Naive thymus-derived CD4-positive, alpha-beta T cell (primary cell): ENCODE measurements at regions of chr4 and their contacts with region 1.

Region 1: GRCh38 chr4:155371432-155372043 is 5.2 kb downstream of the MAP9 start:
- DNase-seq: peak in 5 of 9 donors; percentile 19 to 37 (median 33)
- ATAC-seq: peak; percentile 33
- H3K4me3 ChIP-seq: no peak overlapping the region
- H3K4me3 Mint-ChIP-seq: no peak overlapping the region
- H3K27ac ChIP-seq: no peak overlapping the region
- H3K27ac Mint-ChIP-seq: no peak overlapping the region
- H3K4me1 ChIP-seq: peaks cover 7 to 8% of the 10 kb centered on the region in 2 donors
- H3K4me1 Mint-ChIP-seq: peaks cover 4 to 18% (median 13%) of the 10 kb centered on the region in 7 donors
- H3K27me3 ChIP-seq: no peaks in the 10 kb centered on the region
- H3K27me3 Mint-ChIP-seq: no peaks in the 10 kb centered on the region

Region 2: GRCh38 chr4:154642373-154643009 is 729.0 kb before region 1 on chr4:
- CTCF ChIA-PET with region 1: no interaction called
- POLR2A ChIA-PET with region 1: no interaction called
- intact Hi-C with region 1: loop called in 1 of 2 experiments (anchors 5 kb)
- DNase-seq: no peak
- ATAC-seq: no peak
- H3K4me3 ChIP-seq: no peak overlapping the region
- H3K4me3 Mint-ChIP-seq: no peak overlapping the region
- H3K27ac ChIP-seq: no peak overlapping the region
- H3K27ac Mint-ChIP-seq: no peak overlapping the region
- H3K4me1 ChIP-seq: no peaks in the 10 kb centered on the region
- H3K4me1 Mint-ChIP-seq: no peaks in the 10 kb centered on the region
- H3K27me3 ChIP-seq: no peaks in the 10 kb centered on the region
- H3K27me3 Mint-ChIP-seq: peaks cover 7 to 31% (median 24%) of the 10 kb centered on the region in 5 donors

Region 3: GRCh38 chr4:154807042-154807630 is 564.4 kb before region 1 on chr4:
- CTCF ChIA-PET with region 1: no interaction called
- POLR2A ChIA-PET with region 1: no interaction called
- intact Hi-C with region 1: loop called (anchors 1 to 2 kb)
- DNase-seq: peak in 1 of 9 donors; percentile 15
- ATAC-seq: peak; percentile 41
- H3K4me3 ChIP-seq: no peak overlapping the region
- H3K4me3 Mint-ChIP-seq: peak overlapping the region in 1 of 10 donors; percentile 6
- H3K27ac ChIP-seq: no peak overlapping the region
- H3K27ac Mint-ChIP-seq: no peak overlapping the region
- H3K4me1 ChIP-seq: no peaks in the 10 kb centered on the region
- H3K4me1 Mint-ChIP-seq: peaks cover 0 to 4% (median 0%) of the 10 kb centered on the region in 7 donors
- H3K27me3 ChIP-seq: no peaks in the 10 kb centered on the region
- H3K27me3 Mint-ChIP-seq: peaks cover 0 to 16% (median 7%) of the 10 kb centered on the region in 5 donors

Region 4: DNA sequence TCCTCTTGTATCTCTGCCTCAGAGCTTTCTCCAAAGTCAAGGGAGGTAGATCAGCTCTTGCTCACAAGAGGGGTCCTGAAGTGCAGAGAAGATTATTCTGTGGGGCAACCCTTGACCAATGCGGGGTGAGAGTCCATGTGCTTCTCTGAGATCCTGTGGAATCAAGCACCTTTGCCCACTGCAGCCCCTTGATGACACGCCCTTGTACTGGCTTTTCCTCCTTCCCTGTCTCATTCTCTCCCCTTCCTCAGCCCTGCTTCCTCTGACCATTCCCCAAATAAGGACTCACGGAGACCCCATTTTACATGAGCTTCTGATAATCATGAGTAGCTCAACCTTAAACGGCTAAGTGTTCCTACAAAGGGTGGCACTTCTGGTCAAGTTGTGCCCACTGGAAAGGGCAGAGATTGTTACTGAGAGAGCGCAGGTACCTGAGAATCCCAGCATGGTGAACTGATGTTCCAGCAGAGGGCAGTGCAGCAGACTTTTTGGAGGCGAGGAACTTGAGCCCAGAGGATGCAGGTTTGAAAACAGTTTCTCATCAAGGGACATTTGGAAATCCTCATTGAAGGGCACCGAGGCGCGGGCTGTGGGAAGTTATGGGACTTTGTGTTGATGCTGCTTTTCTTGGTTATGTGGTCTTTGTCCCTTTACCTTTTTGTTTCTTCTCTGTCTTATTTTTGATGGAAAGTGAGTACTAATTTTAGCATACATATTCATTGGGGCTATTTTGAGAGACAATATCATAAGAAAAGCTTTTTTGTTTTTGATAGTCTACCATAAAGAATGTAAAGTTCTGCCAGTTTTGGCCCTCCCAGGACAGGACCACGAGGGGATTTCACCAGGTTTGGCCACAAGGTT is 389.1 kb before region 1 on chr4:
- CTCF ChIA-PET with region 1: no interaction called
- POLR2A ChIA-PET with region 1: no interaction called
- intact Hi-C with region 1: loop called in 1 of 2 experiments (anchors 1 kb)
- DNase-seq: peak in 5 of 9 donors; percentile 3 to 24 (median 7)
- ATAC-seq: peak; percentile 38
- H3K4me3 ChIP-seq: no peak overlapping the region
- H3K4me3 Mint-ChIP-seq: no peak overlapping the region
- H3K27ac ChIP-seq: no peak overlapping the region
- H3K27ac Mint-ChIP-seq: no peak overlapping the region
- H3K4me1 ChIP-seq: no peaks in the 10 kb centered on the region
- H3K4me1 Mint-ChIP-seq: peaks cover 0 to 3% (median 0%) of the 10 kb centered on the region in 7 donors
- H3K27me3 ChIP-seq: no peaks in the 10 kb centered on the region
- H3K27me3 Mint-ChIP-seq: peaks cover 0 to 19% (median 9%) of the 10 kb centered on the region in 5 donors